GM10248 (cell line): ENCODE measurements at regions of chr5 and their contacts with region 1.

Region 1: DNA sequence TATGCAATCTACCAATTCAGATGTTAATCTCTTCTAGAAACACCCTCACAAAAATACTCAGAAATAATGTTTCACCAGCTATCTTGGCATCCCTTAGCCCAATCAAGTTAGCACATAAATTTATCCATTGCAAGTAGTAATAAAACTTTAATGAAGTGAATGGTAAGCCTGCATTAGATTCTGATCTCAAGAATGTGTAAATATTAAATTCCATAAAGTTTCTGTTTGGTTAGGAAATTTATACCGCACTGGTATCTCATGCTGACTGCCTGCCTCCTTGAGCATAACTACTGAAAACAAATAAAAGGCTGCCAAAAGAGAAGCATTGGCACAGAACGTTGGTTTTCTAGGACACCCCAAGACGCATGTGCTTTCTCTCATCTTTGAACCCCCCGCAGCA is 1205.3 kb downstream of the EFNA5 start:
- DNase-seq: no peak
- CTCF ChIP-seq: no peak

Region 2: GRCh38 chr5:106454651-106455415 is 10.6 kb before region 1 on chr5:
- CTCF ChIA-PET with region 1: interaction called, 11 read pairs
- POLR2A ChIA-PET with region 1: no interaction called
- DNase-seq: no peak
- CTCF ChIP-seq: peak; percentile 17